HEK293 (cell line): ENCODE measurements at regions of chr1 and their contacts with region 1.

Region 1: GRCh38 chr1:92858564-92859399 is 26.9 kb downstream of the RPL5 start:
- H3K4me3 ChIP-seq: no peak overlapping the region
- H3K27ac ChIP-seq: no peak overlapping the region
- H3K4me1 ChIP-seq: no peaks in the 10 kb centered on the region
- CTCF ChIP-seq: peak; percentile 90

Region 2: GRCh38 chr1:92599184-92599583 is 259.6 kb before region 1 on chr1:
- CTCF ChIA-PET with region 1: no interaction called
- POLR2A ChIA-PET with region 1: no interaction called
- H3K4me3 ChIP-seq: no peak overlapping the region
- H3K27ac ChIP-seq: no peak overlapping the region
- H3K4me1 ChIP-seq: no peaks in the 10 kb centered on the region
- CTCF ChIP-seq: no peak

Region 3: DNA sequence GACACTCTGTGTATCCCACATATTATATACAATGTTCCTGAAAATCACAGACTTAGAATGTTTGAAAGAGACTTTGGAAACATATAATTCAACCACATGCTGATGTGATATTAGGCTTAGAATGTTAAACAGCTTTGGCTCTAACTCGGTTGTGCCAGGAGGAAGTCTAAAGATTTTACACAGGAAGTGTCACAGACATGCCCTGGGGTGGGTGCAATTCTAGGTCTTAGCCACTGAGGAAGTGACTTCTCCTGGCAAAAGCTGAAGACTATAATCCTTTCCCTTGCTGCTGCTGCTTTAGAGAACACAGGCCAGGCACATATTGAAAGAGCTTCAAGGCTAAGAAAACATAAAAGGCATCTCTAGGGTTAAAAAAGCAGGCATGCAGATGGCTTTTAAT is 24.0 kb after region 1 on chr1:
- CTCF ChIA-PET with region 1: interaction called, 40 read pairs
- POLR2A ChIA-PET with region 1: no interaction called
- H3K4me3 ChIP-seq: no peak overlapping the region
- H3K27ac ChIP-seq: no peak overlapping the region
- H3K4me1 ChIP-seq: 0 out of 2 replicates have a peak, but pooled peaks cover 4% of the 10 kb centered on the region
- CTCF ChIP-seq: no peak

Region 4: GRCh38 chr1:92960395-92961130 is 101.8 kb after region 1 on chr1:
- CTCF ChIA-PET with region 1: interaction called, 42 read pairs
- POLR2A ChIA-PET with region 1: no interaction called
- H3K4me3 ChIP-seq: peak overlapping the region; percentile 77
- H3K27ac ChIP-seq: peak overlapping the region; percentile 74; the same call in 1 of the 2 replicates
- H3K4me1 ChIP-seq: peaks cover 5% of the 10 kb centered on the region; the same call in 1 of the 2 replicates
- CTCF ChIP-seq: peak; percentile 85; the same call in 1 of the 2 replicates

Region 5: GRCh38 chr1:92980732-92981647 is 122.2 kb after region 1 on chr1:
- CTCF ChIA-PET with region 1: interaction called, 68 read pairs
- POLR2A ChIA-PET with region 1: no interaction called
- H3K4me3 ChIP-seq: no peak overlapping the region
- H3K27ac ChIP-seq: no peak overlapping the region
- H3K4me1 ChIP-seq: no peaks in the 10 kb centered on the region
- CTCF ChIP-seq: no peak

Region 6: DNA sequence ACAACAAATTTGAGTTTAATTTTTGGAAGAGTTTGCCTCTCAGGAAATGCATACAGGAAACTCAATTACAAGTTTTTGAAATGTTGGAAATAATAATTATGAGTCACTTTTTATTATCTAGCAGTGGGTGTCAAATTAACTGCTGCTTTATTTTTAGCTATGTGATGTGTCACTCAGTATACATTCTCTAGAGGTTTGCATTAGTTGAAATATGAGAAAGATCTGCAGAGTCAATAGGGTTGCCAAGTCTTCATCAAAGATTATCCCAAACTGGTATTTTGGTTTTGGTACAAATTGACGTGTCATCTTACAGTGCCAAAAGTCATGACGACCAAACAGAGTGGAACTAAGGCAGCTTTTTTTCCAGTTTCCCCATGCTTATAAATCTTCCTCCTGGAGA is 156.8 kb after region 1 on chr1:
- CTCF ChIA-PET with region 1: interaction called, 12 read pairs
- POLR2A ChIA-PET with region 1: no interaction called
- H3K4me3 ChIP-seq: no peak overlapping the region
- H3K27ac ChIP-seq: no peak overlapping the region
- H3K4me1 ChIP-seq: no peaks in the 10 kb centered on the region
- CTCF ChIP-seq: no peak